Sigmoid colon (tissue), 7 donors: ENCODE measurements at regions of chr14 and their contacts with region 1.

Region 1: DNA sequence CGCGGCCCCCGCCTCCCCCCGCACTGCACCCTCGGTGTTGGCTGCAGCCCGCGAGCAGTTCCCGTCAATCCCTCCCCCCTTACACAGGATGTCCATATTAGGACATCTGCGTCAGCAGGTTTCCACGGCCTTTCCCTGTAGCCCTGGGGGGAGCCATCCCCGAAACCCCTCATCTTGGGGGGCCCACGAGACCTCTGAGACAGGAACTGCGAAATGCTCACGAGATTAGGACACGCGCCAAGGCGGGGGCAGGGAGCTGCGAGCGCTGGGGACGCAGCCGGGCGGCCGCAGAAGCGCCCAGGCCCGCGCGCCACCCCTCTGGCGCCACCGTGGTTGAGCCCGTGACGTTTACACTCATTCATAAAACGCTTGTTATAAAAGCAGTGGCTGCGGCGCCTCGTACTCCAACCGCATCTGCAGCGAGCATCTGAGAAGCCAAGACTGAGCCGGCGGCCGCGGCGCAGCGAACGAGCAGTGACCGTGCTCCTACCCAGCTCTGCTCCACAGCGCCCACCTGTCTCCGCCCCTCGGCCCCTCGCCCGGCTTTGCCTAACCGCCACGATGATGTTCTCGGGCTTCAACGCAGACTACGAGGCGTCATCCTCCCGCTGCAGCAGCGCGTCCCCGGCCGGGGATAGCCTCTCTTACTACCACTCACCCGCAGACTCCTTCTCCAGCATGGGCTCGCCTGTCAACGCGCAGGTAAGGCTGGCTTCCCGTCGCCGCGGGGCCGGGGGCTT is at the start of gene FOS:
- DNase-seq: peak; percentile 98
- H3K4me3 ChIP-seq: peak within 1 kb of the TSS; percentile 57 to 83 (median 68)
- H3K27ac ChIP-seq: peak within 1 kb of the TSS; percentile 99 to 100 (median 100)
- H3K4me1 ChIP-seq: peaks cover 0 to 50% (median 42%) of the 10 kb centered on the region in 4 donors
- H3K27me3 ChIP-seq: no peaks in the 10 kb centered on the region
- CTCF ChIP-seq: no peak
- EP300 ChIP-seq: peak in 3 of 4 donors; percentile 53 to 91 (median 82)
- POLR2A ChIP-seq: peak; percentile 99
- total RNA-seq, gene FOS: 172 to 1,048 (median 650) TPM

Region 2: DNA sequence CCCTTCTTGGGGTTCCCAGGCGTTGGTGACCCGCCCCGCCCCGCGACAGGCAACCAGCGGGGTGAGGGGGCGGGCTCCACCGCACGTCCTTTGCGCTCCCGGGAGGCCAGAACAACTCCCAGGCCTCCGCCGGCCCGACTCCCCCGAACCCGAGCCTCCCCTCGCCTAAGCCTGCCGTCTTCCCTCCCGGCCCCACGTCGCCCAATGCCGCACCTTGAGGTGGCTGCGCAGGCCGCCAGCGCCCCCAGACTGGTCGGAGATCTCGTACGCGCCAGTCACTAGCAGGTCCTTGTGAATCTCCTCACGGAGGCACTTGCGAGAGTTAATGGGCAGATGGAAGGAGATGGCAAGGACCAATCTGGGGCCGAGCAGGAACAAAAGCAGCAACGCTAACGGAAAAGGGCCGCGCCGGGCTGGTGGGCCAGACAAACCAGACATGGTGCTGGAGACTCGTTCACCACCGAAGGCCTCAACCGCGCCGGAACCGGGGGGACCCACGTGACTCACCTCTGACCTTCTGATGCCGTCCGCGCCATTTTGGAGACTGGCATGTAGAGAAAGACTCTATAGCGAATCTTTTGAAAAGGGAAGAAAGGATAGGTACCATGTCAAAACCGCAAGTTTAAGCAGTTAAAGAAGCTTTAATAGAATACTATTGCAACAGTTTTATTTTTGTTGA is 102.3 kb before region 1 on chr14 and contains the start of gene TMED10:
- intact Hi-C with region 1: loop called (anchors 5 kb)
- DNase-seq: peak; percentile 96
- H3K4me3 ChIP-seq: peak within 1 kb of the TSS; percentile 84 to 98 (median 90)
- H3K27ac ChIP-seq: peak within 1 kb of the TSS; percentile 97 to 99 (median 98)
- H3K4me1 ChIP-seq: peaks cover 0 to 33% (median 21%) of the 10 kb centered on the region in 4 donors
- H3K27me3 ChIP-seq: no peaks in the 10 kb centered on the region
- CTCF ChIP-seq: no peak
- EP300 ChIP-seq: peak in 1 of 4 donors; percentile 32
- POLR2A ChIP-seq: peak; percentile 66 to 67
- total RNA-seq, gene TMED10: 107 to 175 (median 165) TPM

Region 3: GRCh38 chr14:75234173-75235115 is 44.1 kb before region 1 on chr14:
- intact Hi-C with region 1: loop called (anchors 5 kb)
- DNase-seq: peak; percentile 83
- H3K4me3 ChIP-seq: no peak overlapping the region
- H3K27ac ChIP-seq: peak overlapping the region in 3 of 4 donors; percentile 17 to 86 (median 38)
- H3K4me1 ChIP-seq: peaks cover 0 to 30% (median 25%) of the 10 kb centered on the region in 4 donors
- H3K27me3 ChIP-seq: no peaks in the 10 kb centered on the region
- CTCF ChIP-seq: no peak
- EP300 ChIP-seq: no peak
- POLR2A ChIP-seq: no peak

Region 4: GRCh38 chr14:75591331-75591946 is 312.8 kb after region 1 on chr14:
- intact Hi-C with region 1: no loop called
- DNase-seq: peak; percentile 30
- H3K4me3 ChIP-seq: no peak overlapping the region
- H3K27ac ChIP-seq: no peak overlapping the region
- H3K4me1 ChIP-seq: no peaks in the 10 kb centered on the region
- H3K27me3 ChIP-seq: no peaks in the 10 kb centered on the region
- CTCF ChIP-seq: no peak
- EP300 ChIP-seq: no peak
- POLR2A ChIP-seq: no peak

Region 5: GRCh38 chr14:77033622-77034521 is 1755.3 kb after region 1 on chr14:
- intact Hi-C with region 1: loop called (anchors 10 kb)
- DNase-seq: peak; percentile 94
- H3K4me3 ChIP-seq: peak overlapping the region; percentile 49 to 69 (median 55)
- H3K27ac ChIP-seq: peak overlapping the region; percentile 97 to 100 (median 100)
- H3K4me1 ChIP-seq: peaks cover 0 to 78% (median 77%) of the 10 kb centered on the region in 4 donors
- H3K27me3 ChIP-seq: no peaks in the 10 kb centered on the region
- CTCF ChIP-seq: no peak
- EP300 ChIP-seq: peak in 2 of 4 donors; percentile 2 to 44
- POLR2A ChIP-seq: peak; percentile 7 to 44